WTC11 (cell line): ENCODE measurements at regions of chr17 and their contacts with region 1.

Region 1: DNA sequence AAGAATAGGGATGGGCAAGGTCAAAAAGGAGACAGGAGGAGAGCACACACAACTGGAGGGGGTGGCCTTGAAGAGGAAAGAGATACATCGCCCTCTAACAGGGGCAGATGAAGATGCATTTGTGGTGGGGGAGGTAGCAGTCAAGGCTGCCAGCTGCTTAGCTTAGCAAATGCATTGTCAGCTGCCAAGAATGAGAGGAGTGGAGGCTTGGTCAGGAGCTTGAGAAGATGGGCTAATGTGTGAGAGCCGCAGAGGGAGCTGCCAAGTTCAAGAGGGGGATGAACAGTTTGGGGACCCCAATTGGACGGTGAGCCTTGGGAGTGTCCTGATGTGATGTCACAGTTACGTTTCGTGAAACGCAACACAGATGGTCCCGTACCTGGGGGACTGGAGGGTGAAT is 28.9 kb upstream of the GNA13 start:
- DNase-seq: no peak
- ATAC-seq: peak; percentile 52
- H3K4me3 Mint-ChIP-seq: no peak overlapping the region
- H3K27ac Mint-ChIP-seq: no peak overlapping the region
- H3K4me1 Mint-ChIP-seq: peaks cover 8% of the 10 kb centered on the region
- H3K27me3 Mint-ChIP-seq: no peaks in the 10 kb centered on the region; the same call in 1 of the 2 replicates
- CTCF ChIP-seq: no peak

Region 2: GRCh38 chr17:65074778-65075250 is 10.6 kb before region 1 on chr17:
- CTCF ChIA-PET with region 1: interaction called, 10 read pairs
- POLR2A ChIA-PET with region 1: no interaction called
- DNase-seq: no peak
- ATAC-seq: no peak
- H3K4me3 Mint-ChIP-seq: no peak overlapping the region
- H3K27ac Mint-ChIP-seq: no peak overlapping the region
- H3K4me1 Mint-ChIP-seq: peaks cover 26% of the 10 kb centered on the region
- H3K27me3 Mint-ChIP-seq: no peaks in the 10 kb centered on the region; the same call in 1 of the 2 replicates
- CTCF ChIP-seq: no peak